Ascending aorta (tissue), 2 donors: ENCODE measurements at regions of chr2 and their contacts with region 1.

Region 1: DNA sequence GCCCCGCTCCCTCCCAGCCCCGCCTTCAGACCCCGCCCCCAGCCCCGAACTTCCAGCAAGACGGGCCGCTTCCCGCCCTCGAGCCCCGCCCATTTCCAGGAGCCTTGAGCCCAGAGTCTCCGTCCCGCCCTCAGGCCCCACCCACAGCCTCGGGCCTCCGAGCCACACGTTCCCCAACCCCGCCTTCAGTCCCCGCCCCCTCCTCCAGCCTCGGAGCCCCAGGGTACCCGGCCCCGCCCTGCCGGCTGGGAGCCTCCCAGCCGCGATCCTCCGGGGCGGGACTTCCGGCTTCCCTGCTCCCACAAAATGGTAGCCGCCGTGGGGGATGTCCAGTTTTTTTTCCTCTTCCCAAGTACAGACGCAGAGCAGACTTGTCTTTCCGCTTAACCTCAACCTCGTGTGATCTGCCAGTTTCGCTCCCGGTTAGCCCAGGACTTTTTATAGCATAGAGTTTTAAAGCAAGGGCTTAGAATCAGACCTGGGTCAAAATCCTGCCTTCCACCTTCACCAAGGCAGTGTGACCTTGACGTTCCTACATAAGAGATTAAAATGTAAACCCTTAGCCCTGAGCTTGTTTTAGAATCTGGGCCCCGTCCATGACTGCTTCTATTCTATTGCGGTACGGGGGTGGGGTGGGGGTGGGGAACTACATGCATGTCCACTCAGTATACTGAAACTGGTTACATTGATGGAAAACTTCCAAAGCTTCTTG is 435 bp upstream of the GPR155 start:
- DNase-seq: peak; percentile 97 to 100
- H3K4me3 ChIP-seq: peak overlapping the region; percentile 76 to 97
- H3K27ac ChIP-seq: peak overlapping the region; percentile 61 to 71
- H3K4me1 ChIP-seq: peaks cover 0 to 6% of the 10 kb centered on the region in 2 donors
- H3K27me3 ChIP-seq: no peaks in the 10 kb centered on the region
- CTCF ChIP-seq: no peak

Region 2: DNA sequence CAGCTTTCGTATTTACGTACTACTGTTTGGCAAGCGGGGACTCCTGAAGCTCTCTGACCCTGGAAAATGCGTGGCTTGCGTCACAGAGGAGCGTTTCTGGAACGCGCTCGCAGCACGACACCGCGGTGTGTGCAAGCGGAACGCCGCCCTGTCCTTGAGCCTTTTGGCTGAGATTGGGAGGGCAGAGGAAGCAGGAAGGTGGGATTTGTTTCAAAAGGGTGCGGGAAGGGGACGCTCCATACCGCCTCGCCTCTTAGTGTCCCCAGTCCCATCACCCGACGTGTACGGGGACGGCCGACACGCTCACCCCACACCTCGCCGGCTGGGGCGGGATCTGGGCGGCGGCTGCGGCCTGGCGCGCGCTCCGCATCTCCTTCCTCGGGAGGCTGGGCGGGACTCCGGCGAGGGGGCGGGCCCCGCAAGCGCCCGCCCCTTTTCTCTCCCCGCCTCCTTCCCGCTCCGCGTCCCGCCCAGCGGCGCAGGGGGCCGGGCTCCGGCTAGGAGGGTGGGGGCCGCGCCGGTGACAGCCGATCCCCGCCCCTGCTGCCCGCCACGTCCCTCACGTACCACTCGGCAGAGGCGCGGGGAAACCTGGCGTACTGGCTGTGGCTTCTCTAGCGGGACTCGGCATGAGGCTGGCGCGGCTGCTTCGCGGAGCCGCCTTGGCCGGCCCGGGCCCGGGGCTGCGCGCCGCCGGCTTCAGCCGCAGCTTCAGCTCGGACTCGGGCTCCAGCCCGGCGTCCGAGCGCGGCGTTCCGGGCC is 1931.6 kb before region 1 on chr2 and contains the start of gene PDK1:
- intact Hi-C with region 1: loop called (anchors 2 kb)
- DNase-seq: peak; percentile 52 to 93
- H3K4me3 ChIP-seq: peak within 1 kb of the TSS; percentile 96 to 97
- H3K27ac ChIP-seq: peak within 1 kb of the TSS; percentile 93 to 95
- H3K4me1 ChIP-seq: peaks cover 0 to 10% of the 10 kb centered on the region in 2 donors
- H3K27me3 ChIP-seq: no peaks in the 10 kb centered on the region
- CTCF ChIP-seq: no peak
- total RNA-seq, gene PDK1: 24.2 TPM

Region 3: GRCh38 chr2:174248187-174248997 is 238.9 kb before region 1 on chr2 and contains the start of gene OLA1:
- intact Hi-C with region 1: loop called (anchors 5 kb)
- DNase-seq: peak; percentile 75 to 96
- H3K4me3 ChIP-seq: peak within 1 kb of the TSS; percentile 77 to 91
- H3K27ac ChIP-seq: peak within 1 kb of the TSS; percentile 68 to 91
- H3K4me1 ChIP-seq: peaks cover 5 to 6% of the 10 kb centered on the region in 2 donors
- H3K27me3 ChIP-seq: no peaks in the 10 kb centered on the region
- CTCF ChIP-seq: peak in 1 of 3 experiments; percentile 3
- total RNA-seq, gene OLA1: 29.5 TPM

Region 4: GRCh38 chr2:174395284-174395968 is 91.8 kb before region 1 on chr2 and contains the start of gene SCRN3:
- intact Hi-C with region 1: loop called (anchors 5 kb)
- DNase-seq: peak; percentile 28 to 85
- H3K4me3 ChIP-seq: peak within 1 kb of the TSS; percentile 76 to 91
- H3K27ac ChIP-seq: peak within 1 kb of the TSS; percentile 58 to 75
- H3K4me1 ChIP-seq: peaks cover 5 to 18% of the 10 kb centered on the region in 2 donors
- H3K27me3 ChIP-seq: no peaks in the 10 kb centered on the region
- CTCF ChIP-seq: no peak
- total RNA-seq, gene SCRN3: 2.3 TPM

Region 5: GRCh38 chr2:174682578-174683391 is 195.5 kb after region 1 on chr2:
- intact Hi-C with region 1: loop called (anchors 1 kb)
- DNase-seq: peak in 1 of 2 donors; percentile 82
- H3K4me3 ChIP-seq: peak overlapping the region; percentile 83 to 84
- H3K27ac ChIP-seq: peak overlapping the region; percentile 86 to 95
- H3K4me1 ChIP-seq: peaks cover 4 to 21% of the 10 kb centered on the region in 2 donors
- H3K27me3 ChIP-seq: no peaks in the 10 kb centered on the region
- CTCF ChIP-seq: no peak

Region 6: GRCh38 chr2:175167792-175168563 is 680.7 kb after region 1 on chr2 and contains the start of gene ATF2:
- intact Hi-C with region 1: loop called (anchors 2 kb)
- DNase-seq: peak; percentile 99 to 100
- H3K4me3 ChIP-seq: peak within 1 kb of the TSS; percentile 81 to 83
- H3K27ac ChIP-seq: peak within 1 kb of the TSS; percentile 95 to 96
- H3K4me1 ChIP-seq: peaks cover 0 to 3% of the 10 kb centered on the region in 2 donors
- H3K27me3 ChIP-seq: no peaks in the 10 kb centered on the region
- CTCF ChIP-seq: no peak
- total RNA-seq, gene ATF2: 84.8 TPM